ENCODE measurements at regions of chr1 and their contacts with region 1.

Region 1: GRCh38 chr1:48039088-48040054 is 42.2 kb upstream of the TRABD2B start:
- DNase-seq: peak; percentile 28
- CTCF ChIP-seq: no peak

Region 2: DNA sequence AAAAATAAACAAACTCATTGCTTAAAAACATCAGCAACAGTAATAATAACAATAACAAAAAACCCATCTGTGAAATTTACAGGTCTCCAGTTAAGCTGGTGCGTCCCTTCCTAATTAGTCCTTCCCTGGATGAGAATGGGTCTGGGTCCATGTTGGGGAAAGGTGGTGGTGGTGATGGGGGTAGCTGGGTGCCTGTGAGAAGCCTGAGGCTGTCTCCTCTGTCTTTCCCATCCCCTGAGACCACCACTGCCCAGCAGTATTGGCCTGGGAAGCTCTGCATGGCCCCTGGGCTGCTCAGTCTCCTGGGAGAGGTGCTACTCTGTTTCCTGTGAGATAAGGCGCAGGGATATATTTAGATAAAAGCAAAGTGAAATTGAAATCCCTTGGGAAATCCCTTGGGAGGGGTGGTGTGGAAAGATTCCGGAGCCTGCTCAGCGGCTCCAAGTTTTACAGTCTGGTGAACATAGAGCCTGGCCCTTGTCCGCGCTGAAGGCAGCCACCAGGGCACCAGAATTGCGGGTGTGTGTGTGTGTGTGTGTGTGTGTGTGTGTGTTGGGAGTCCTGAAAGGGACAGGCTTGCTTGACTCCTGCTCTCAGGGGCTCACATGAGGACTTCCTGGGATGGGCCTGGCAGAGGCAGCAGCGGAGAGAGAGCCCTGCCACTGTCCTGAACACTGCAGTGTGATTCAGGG is 451.3 kb before region 1 on chr1:
- in situ Hi-C with region 1: no loop called
- DNase-seq: no peak
- CTCF ChIP-seq: no peak

Region 3: GRCh38 chr1:47785561-47786271 is 253.7 kb before region 1 on chr1:
- in situ Hi-C with region 1: no loop called
- DNase-seq: no peak
- CTCF ChIP-seq: no peak

Region 4: DNA sequence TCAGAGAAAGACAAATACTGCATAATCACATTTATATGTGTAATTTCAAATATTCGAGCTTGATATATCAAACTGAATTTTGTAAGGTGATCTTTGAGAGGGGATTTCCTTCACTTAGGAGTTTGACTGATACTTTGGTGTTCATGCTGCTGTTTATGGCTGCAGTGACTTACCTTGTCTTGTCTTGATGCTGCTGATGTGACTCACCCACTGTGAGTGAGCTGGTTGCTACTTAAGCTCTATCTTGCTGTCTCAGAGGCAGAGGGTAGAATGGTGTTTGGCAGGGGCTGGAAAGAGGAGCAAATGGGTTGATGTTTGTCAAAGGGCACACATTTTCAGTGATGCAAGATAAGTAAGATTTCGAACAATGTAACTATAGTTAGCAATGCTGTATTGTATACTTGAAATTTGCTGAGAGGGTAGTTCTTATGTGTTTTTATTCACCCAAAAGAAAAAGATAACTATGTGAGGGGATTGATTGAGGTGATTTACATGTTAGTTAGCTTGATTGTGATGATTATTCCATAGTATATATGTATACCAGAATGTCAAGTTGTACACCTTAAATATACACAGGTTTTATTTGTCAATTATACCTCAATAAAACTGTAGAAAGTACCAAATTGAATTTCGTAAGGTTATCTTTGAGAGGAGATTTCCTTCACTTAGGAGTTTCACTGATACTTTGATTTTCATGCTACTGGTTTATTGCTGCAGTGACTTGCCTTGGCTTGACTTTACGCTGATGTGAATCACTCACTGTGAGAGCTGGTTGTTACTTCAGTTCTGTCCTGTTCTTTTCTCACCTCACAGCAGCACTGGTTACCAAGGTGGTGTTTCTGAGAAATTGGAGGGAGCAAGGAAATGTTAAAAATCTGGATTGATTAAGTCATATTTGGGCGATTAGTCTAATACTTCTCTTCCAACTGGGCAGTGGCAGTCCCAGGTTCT is 88.6 kb after region 1 on chr1:
- in situ Hi-C with region 1: loop called (anchors 25 kb)
- DNase-seq: no peak
- CTCF ChIP-seq: no peak

Measured in GM13977 (cell line).